ENCODE measurements at regions of chr7 and their contacts with region 1.

Region 1: DNA sequence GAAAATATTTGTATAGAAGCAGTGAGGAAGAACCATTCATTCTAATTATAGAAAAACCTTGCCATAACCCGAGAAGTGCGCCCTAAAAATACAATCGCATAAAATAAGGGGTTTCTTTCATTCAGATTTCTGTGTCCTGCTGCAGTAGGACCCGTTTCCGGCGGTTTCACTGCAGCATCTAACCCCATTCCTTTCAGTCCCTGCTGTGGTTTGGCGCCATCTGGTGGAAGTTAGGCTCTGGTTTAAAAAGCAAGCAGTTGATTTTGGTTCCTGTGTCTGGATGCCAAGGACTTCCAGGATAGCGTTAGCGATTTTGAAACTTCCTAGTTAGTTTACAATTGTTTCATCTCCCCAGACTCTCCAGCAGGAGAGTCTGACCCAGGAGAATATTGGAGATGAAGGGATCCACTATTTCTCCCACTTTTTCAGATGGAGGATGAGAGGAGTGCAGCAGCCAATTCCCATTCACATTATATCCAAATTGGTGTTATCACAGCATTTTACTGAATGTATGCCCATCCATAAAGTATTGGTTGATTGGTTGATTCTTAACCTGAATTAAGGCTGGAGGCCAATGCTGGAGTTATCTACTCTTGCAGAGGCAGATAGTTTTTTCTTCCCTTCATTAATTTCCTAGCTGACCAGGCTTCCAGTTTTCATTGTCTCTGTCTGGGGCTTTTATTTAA is 128.8 kb upstream of the CACNA2D1 start:
- DNase-seq: peak; percentile 75 to 88
- ATAC-seq: peak in 7 of 8 donors; percentile 74 to 88 (median 86)
- H3K4me3 ChIP-seq: peak overlapping the region in 2 of 10 donors; percentile 0 to 10
- H3K27ac ChIP-seq: no peak overlapping the region
- H3K4me1 ChIP-seq: peaks cover 0 to 8% (median 0%) of the 10 kb centered on the region in 9 donors
- H3K27me3 ChIP-seq: no peaks in the 10 kb centered on the region
- CTCF ChIP-seq: peak; percentile 72 to 94 (median 92)

Region 2: DNA sequence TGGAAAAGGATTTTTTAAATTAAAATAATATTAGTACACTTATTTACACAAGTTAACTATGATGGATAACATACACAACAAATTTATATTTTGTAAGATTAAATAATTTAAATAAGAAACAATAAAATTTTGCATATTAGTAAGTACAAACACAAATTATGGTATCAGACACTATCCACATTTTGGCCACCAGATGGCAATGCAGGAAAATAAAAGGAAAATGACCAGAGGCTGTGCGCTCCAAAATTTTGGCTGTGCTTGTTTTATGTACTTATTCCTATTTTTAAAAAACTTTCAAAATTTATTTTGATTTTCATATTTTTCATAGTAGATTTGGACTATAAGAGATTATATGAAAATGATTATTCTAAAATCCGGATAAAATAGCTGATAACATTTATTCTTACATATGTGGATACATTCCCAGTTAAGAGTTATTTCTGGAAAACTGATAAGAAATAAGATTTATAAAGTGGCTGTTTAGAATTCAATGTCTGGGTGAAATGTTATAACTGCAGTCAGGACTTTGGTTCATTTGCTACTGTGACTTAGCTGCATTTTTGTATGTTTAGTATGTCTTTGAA is 527.7 kb before region 1 on chr7:
- intact Hi-C with region 1: loop called in 9 of 10 experiments (anchors 1 to 5 kb)
- DNase-seq: peak in 1 of 2 donors; percentile 42
- ATAC-seq: peak in 5 of 8 donors; percentile 42 to 65 (median 55)
- H3K4me3 ChIP-seq: no peak overlapping the region
- H3K27ac ChIP-seq: no peak overlapping the region
- H3K4me1 ChIP-seq: peaks cover 0 to 15% (median 5%) of the 10 kb centered on the region in 9 donors
- H3K27me3 ChIP-seq: no peaks in the 10 kb centered on the region
- CTCF ChIP-seq: peak; percentile 35 to 83 (median 75)

Region 3: DNA sequence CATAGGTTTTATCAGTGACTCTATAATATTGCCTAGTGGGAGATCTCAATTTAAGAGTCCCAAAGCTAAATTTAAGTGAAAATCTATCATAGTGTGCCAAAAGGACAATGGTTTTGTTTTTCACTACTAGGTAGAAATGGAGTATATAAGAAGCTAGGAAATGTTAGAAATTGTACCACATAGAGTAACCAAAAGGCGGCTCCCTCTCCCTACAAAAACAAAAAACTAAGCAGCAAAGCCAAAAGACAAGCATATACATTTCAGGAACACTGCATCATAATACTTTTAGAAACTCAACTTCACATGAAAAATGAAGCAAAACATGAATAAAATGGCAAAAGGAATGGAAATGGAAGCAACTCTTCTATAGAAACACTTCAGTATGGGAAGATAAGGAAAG is 400.3 kb before region 1 on chr7:
- intact Hi-C with region 1: loop called in 2 of 10 experiments (anchors 10 kb)
- DNase-seq: no peak
- ATAC-seq: no peak
- H3K4me3 ChIP-seq: no peak overlapping the region
- H3K27ac ChIP-seq: no peak overlapping the region
- H3K4me1 ChIP-seq: peaks cover 0 to 14% (median 0%) of the 10 kb centered on the region in 9 donors
- H3K27me3 ChIP-seq: no peaks in the 10 kb centered on the region
- CTCF ChIP-seq: no peak

Region 4: DNA sequence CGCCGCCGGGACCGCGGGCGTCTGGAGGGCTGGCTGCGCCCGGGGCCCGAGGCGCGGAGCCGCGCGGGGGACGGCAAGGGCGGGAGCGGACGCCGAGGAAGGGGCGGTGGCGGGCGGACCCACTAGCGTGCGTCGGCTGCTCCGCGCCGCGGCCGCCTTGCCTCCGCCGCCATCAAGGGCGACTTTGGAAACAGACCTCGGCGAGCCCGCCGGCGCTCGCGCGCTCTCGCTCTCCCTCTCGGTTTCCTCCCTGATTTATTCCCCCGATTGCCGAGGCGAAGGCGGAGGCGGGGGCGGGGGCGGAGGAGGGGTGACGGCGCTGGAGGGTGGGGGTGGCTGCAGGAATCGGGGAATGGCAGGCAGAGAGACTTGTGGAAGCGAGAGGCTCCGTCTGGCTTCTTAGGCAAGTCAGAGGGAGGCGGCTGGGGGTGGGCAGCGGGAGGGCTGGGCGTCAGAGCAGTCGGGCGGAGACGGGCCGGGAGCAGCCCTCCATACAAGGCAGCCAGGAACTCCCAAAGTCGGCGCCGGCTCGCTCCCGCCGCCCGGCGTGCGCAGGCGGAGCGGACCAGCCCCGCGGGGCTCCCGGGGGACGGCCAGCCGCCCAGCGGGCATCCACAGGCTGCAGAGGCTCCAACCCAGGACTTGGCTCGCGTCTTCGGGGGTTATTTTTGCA is 128.7 kb before region 1 on chr7 and contains the start of gene CACNA2D1:
- intact Hi-C with region 1: loop called in 1 of 10 experiments (anchors 5 kb)
- DNase-seq: peak; percentile 88 to 89
- ATAC-seq: peak; percentile 94 to 99 (median 96)
- H3K4me3 ChIP-seq: peak within 1 kb of the TSS; percentile 36 to 77 (median 70)
- H3K27ac ChIP-seq: peak within 1 kb of the TSS; percentile 86 to 97 (median 92)
- H3K4me1 ChIP-seq: peaks cover 0 to 38% (median 20%) of the 10 kb centered on the region in 9 donors
- H3K27me3 ChIP-seq: peaks cover 0 to 51% (median 3%) of the 10 kb centered on the region in 7 donors
- CTCF ChIP-seq: peak in 5 of 9 donors; percentile 25 to 64 (median 61)
- total RNA-seq, gene CACNA2D1: 34.0 to 131 (median 81.6) TPM

Region 5: GRCh38 chr7:82506702-82507101 is 65.6 kb before region 1 on chr7:
- intact Hi-C with region 1: no loop called
- DNase-seq: peak; percentile 20 to 24
- ATAC-seq: peak in 5 of 8 donors; percentile 34 to 89 (median 59)
- H3K4me3 ChIP-seq: no peak overlapping the region
- H3K27ac ChIP-seq: no peak overlapping the region
- H3K4me1 ChIP-seq: no peaks in the 10 kb centered on the region
- H3K27me3 ChIP-seq: peaks cover 0 to 7% (median 0%) of the 10 kb centered on the region in 7 donors
- CTCF ChIP-seq: no peak

Region 6: GRCh38 chr7:82729172-82730030 is 157.1 kb after region 1 on chr7:
- intact Hi-C with region 1: loop called in 1 of 10 experiments (anchors 10 kb)
- DNase-seq: no peak
- ATAC-seq: no peak
- H3K4me3 ChIP-seq: no peak overlapping the region
- H3K27ac ChIP-seq: no peak overlapping the region
- H3K4me1 ChIP-seq: no peaks in the 10 kb centered on the region
- H3K27me3 ChIP-seq: no peaks in the 10 kb centered on the region
- CTCF ChIP-seq: peak in 8 of 9 donors; percentile 20 to 61 (median 53)